ENCODE measurements at regions of chr5 and their contacts with region 1.

Region 1: GRCh38 chr5:113606298-113607134 is 93.0 kb downstream of the YTHDC2 start:
- DNase-seq: peak; percentile 61
- ATAC-seq: peak; percentile 100
- H3K4me3 ChIP-seq: peak overlapping the region in 1 of 3 experiments; percentile 11; a peak in 1 of 6 replicates
- H3K27ac ChIP-seq: no peak overlapping the region
- H3K4me1 ChIP-seq: 0 out of 2 replicates have a peak, but pooled peaks cover 7% of the 10 kb centered on the region
- H3K27me3 ChIP-seq: 0 out of 5 replicates have a peak, but pooled peaks cover 0 to 2% of the 10 kb centered on the region in 2 experiments
- CTCF ChIP-seq: peak; percentile 91
- EP300 ChIP-seq: no peak
- POLR2A ChIP-seq: no peak
- RAD21 ChIP-seq: peak; percentile 62

Region 2: DNA sequence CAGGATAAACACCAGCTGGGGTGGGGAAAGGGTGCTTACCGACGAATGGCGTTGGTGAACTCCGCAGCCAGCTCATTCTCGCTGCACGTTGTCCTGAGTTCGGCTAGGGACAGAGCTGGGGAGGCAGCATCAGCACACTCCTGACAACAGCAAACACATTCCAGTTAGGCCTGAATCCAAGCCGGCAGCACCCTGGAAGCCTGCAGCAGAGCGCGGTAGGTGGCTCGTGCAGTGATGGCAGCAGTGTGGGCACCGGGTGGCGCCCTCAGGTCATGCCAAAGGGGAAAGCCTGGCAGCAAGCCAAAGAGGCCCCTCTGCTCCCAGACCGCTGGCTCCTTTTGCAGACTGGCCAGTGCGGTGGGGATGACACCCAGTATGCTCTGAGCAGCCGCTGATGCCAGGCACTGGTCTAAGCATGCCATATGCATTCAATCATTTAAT is 563.0 kb before region 1 on chr5:
- CTCF ChIA-PET with region 1: interaction called, 3 read pairs
- POLR2A ChIA-PET with region 1: no interaction called
- in situ Hi-C with region 1: no loop called
- intact Hi-C with region 1: loop called (anchors 5 kb)
- DNase-seq: peak; percentile 7
- ATAC-seq: peak; percentile 78
- H3K4me3 ChIP-seq: no peak overlapping the region
- H3K27ac ChIP-seq: no peak overlapping the region
- H3K4me1 ChIP-seq: no peaks in the 10 kb centered on the region
- H3K27me3 ChIP-seq: no peaks in the 10 kb centered on the region
- CTCF ChIP-seq: peak; percentile 77
- EP300 ChIP-seq: no peak
- POLR2A ChIP-seq: no peak
- RAD21 ChIP-seq: peak; percentile 63; the same call in 1 of the 2 replicates

Region 3: GRCh38 chr5:113336975-113337374 is 269.5 kb before region 1 on chr5:
- CTCF ChIA-PET with region 1: interaction called, 6 read pairs
- POLR2A ChIA-PET with region 1: no interaction called
- in situ Hi-C with region 1: no loop called
- intact Hi-C with region 1: loop called (anchors 5 kb)
- DNase-seq: peak; percentile 46
- ATAC-seq: peak; percentile 96
- H3K4me3 ChIP-seq: no peak overlapping the region
- H3K27ac ChIP-seq: no peak overlapping the region
- H3K4me1 ChIP-seq: no peaks in the 10 kb centered on the region
- H3K27me3 ChIP-seq: no peaks in the 10 kb centered on the region
- CTCF ChIP-seq: peak; percentile 62
- EP300 ChIP-seq: no peak
- POLR2A ChIP-seq: no peak
- RAD21 ChIP-seq: peak; percentile 38; the same call in 1 of the 2 replicates

Region 4: GRCh38 chr5:113378959-113379541 is 227.5 kb before region 1 on chr5:
- CTCF ChIA-PET with region 1: interaction called, 15 read pairs
- POLR2A ChIA-PET with region 1: no interaction called
- in situ Hi-C with region 1: loop called (anchors 10 kb)
- intact Hi-C with region 1: loop called (anchors 1 kb)
- DNase-seq: peak; percentile 47
- ATAC-seq: peak; percentile 77
- H3K4me3 ChIP-seq: no peak overlapping the region
- H3K27ac ChIP-seq: no peak overlapping the region
- H3K4me1 ChIP-seq: no peaks in the 10 kb centered on the region
- H3K27me3 ChIP-seq: no peaks in the 10 kb centered on the region
- CTCF ChIP-seq: peak; percentile 84
- EP300 ChIP-seq: no peak
- POLR2A ChIP-seq: no peak
- RAD21 ChIP-seq: no peak

Region 5: DNA sequence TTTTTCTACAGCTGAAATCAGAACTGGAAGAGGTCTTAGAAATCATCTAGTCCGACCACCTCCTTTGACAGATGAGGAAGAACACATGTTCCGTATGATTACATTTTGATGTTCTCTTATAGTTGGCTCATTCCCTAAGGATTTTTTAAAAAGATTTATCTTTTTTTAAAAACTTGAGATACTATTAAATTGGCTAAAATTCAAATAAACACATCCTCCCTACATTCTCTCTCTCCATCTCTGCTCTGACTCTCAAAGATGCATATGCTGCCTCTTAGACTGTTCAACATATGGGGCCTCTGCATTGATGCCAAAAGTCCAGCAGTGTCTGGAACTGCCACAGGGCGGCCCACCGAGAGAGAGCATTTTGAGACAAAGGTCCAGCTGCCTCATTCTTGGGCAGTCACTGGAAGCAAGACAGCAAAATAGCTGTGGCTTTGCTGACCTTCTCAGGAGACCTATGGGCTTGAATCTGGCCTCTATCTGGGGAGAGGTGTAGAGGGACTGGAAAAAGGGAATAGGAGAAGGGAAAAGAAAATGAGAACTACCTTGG is 158.9 kb before region 1 on chr5:
- CTCF ChIA-PET with region 1: no interaction called
- POLR2A ChIA-PET with region 1: no interaction called
- in situ Hi-C with region 1: no loop called
- intact Hi-C with region 1: loop called (anchors 10 kb)
- DNase-seq: peak; percentile 23
- ATAC-seq: peak; percentile 98
- H3K4me3 ChIP-seq: no peak overlapping the region
- H3K27ac ChIP-seq: no peak overlapping the region
- H3K4me1 ChIP-seq: no peaks in the 10 kb centered on the region
- H3K27me3 ChIP-seq: no peaks in the 10 kb centered on the region; a peak in 2 of 5 replicates
- CTCF ChIP-seq: peak; percentile 58
- EP300 ChIP-seq: no peak
- POLR2A ChIP-seq: no peak
- RAD21 ChIP-seq: no peak